Gastrocnemius medialis (tissue), 4 donors: ENCODE measurements at regions of chr4 and their contacts with region 1.

Region 1: GRCh38 chr4:158172261-158173258 is at the start of gene GASK1B:
- DNase-seq: no peak
- ATAC-seq: no peak
- H3K4me3 ChIP-seq: peak within 1 kb of the TSS; percentile 54 to 59 (median 57)
- H3K27ac ChIP-seq: peak within 1 kb of the TSS; percentile 50 to 73 (median 68)
- H3K4me1 ChIP-seq: peaks cover 0 to 3% of the 10 kb centered on the region in 2 donors
- H3K27me3 ChIP-seq: no peaks in the 10 kb centered on the region
- CTCF ChIP-seq: peak; percentile 8 to 48 (median 33)
- POLR2A ChIP-seq: no peak
- total RNA-seq, gene GASK1B: 1.8 to 9.8 (median 7.9) TPM

Region 2: GRCh38 chr4:157992038-157992705 is 180.4 kb before region 1 on chr4:
- in situ Hi-C with region 1: loop called (anchors 5 to 10 kb)
- intact Hi-C with region 1: loop called (anchors 1 kb)
- DNase-seq: peak in 1 of 2 donors; percentile 5
- ATAC-seq: peak; percentile 83 to 84
- H3K4me3 ChIP-seq: peak overlapping the region; percentile 32 to 41 (median 36)
- H3K27ac ChIP-seq: peak overlapping the region in 3 of 4 donors; percentile 51 to 56 (median 52)
- H3K4me1 ChIP-seq: peaks cover 0 to 5% of the 10 kb centered on the region in 2 donors
- H3K27me3 ChIP-seq: no peaks in the 10 kb centered on the region
- CTCF ChIP-seq: peak; percentile 44 to 69 (median 61)
- POLR2A ChIP-seq: no peak

Region 3: GRCh38 chr4:158079661-158080060 is 92.9 kb before region 1 on chr4:
- in situ Hi-C with region 1: no loop called
- intact Hi-C with region 1: no loop called
- DNase-seq: no peak
- ATAC-seq: peak in 1 of 2 donors; percentile 50
- H3K4me3 ChIP-seq: no peak overlapping the region
- H3K27ac ChIP-seq: no peak overlapping the region
- H3K4me1 ChIP-seq: no peaks in the 10 kb centered on the region
- H3K27me3 ChIP-seq: no peaks in the 10 kb centered on the region
- CTCF ChIP-seq: no peak
- POLR2A ChIP-seq: no peak